K562 (cell line): ENCODE measurements at regions of chr1 and their contacts with region 1.

Region 1: GRCh38 chr1:11707621-11708276 is 16.2 kb downstream of the DRAXIN start:
- DNase-seq: peak; percentile 73 to 88 (median 78)
- ATAC-seq: peak; percentile 78
- H3K4me3 ChIP-seq: no peak overlapping the region
- H3K27ac ChIP-seq: peak overlapping the region; percentile 71
- H3K4me1 ChIP-seq: peaks cover 12 to 48% of the 10 kb centered on the region in 2 experiments
- H3K27me3 ChIP-seq: peaks cover 7 to 24% of the 10 kb centered on the region in 2 experiments; a peak in 3 of 5 replicates
- CTCF ChIP-seq: peak; percentile 5 to 11 (median 6); a peak in 3 of 6 replicates
- EP300 ChIP-seq: no peak
- POLR2A ChIP-seq: no peak
- RAD21 ChIP-seq: 0 out of 4 replicates have a peak, but pooled peaks of 1 of the 2 experiments have one; percentile 0

Region 2: GRCh38 chr1:11671544-11672286 is 36.0 kb before region 1 on chr1:
- CTCF ChIA-PET with region 1: no interaction called
- POLR2A ChIA-PET with region 1: interaction called, 8 read pairs
- in situ Hi-C with region 1: no loop called
- intact Hi-C with region 1: loop called (anchors 5 kb)
- DNase-seq: peak; percentile 66 to 87 (median 77)
- ATAC-seq: peak; percentile 82
- H3K4me3 ChIP-seq: no peak overlapping the region
- H3K27ac ChIP-seq: peak overlapping the region; percentile 67
- H3K4me1 ChIP-seq: peaks cover 20 to 57% of the 10 kb centered on the region in 2 experiments
- H3K27me3 ChIP-seq: no peaks in the 10 kb centered on the region
- CTCF ChIP-seq: no peak; a peak in 1 of 6 replicates
- EP300 ChIP-seq: peak; percentile 95
- POLR2A ChIP-seq: peak; percentile 53
- RAD21 ChIP-seq: peak in 1 of 2 experiments; percentile 8; a peak in 1 of 4 replicates

Region 3: DNA sequence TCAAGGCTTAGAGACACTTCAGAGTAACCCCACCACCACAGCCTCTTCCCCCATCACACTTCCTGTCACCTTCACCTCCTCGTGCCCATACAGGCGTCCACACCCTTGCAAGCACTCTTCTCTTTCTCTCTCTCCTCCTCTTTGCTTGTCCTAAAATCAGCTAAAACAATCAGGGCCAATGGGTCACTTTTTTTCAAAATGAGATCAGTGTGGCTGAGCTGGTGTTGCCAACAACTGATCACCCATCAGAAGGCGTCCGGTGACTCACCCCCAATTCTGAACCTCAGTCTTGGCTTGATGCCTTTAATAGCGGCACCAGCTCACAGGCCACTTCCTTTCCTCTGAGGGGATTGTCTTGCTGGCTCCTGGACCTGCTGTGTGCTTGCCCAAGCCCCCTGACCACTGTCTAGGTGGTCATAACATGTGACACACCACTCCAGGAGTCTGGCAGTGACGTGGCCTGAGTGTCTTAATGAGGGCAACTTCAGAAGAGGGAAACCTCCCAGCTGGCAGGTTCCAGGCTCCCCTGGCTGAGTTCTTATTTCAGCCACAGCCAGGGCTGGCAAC is 14.6 kb before region 1 on chr1:
- CTCF ChIA-PET with region 1: no interaction called
- POLR2A ChIA-PET with region 1: interaction called, 6 read pairs
- in situ Hi-C with region 1: no loop called
- intact Hi-C with region 1: loop called (anchors 1 kb)
- DNase-seq: peak; percentile 56 to 65 (median 60)
- ATAC-seq: peak; percentile 33
- H3K4me3 ChIP-seq: no peak overlapping the region
- H3K27ac ChIP-seq: no peak overlapping the region
- H3K4me1 ChIP-seq: peaks cover 42 to 57% of the 10 kb centered on the region in 2 experiments
- H3K27me3 ChIP-seq: no peaks in the 10 kb centered on the region
- CTCF ChIP-seq: no peak
- EP300 ChIP-seq: no peak
- POLR2A ChIP-seq: no peak
- RAD21 ChIP-seq: no peak